Activated B cell treated with CpG ODN at 0.5 μM for 24 hours (primary cell): ENCODE measurements at regions of chr14 and their contacts with region 1.

Region 1: DNA sequence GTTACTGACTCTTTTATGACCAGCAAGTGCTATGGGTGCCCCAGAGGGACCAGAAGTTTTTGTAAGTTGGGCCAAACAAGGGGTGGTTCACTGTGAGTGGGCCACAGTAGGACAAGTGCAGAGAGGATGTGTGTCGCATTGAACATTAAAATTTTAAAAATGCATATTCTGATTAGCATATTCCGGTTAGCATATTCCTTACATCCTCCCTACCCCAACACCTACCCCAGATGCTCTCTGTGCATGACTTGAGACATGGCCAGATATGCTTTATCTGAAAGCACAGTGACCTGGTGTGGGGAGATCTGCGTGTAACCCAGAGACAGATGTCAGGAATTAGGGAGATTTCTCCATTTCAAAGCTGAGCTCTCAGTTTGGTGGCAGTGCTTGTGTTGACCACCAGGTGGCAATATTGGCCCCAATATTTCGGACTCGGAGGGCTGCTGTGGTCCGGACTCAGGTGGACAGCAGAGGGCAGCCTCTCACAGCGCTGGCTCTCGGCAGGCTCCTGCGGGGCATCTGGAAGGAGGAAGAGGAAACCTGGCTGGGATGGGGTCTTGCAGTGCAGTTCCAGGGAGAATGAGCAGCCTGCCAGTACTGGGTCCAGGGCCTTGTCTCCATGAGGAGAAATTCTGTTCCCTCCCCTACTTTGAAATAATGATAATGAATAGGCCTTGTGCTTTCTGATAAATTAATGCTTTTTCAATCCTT is 1.6 kb upstream of the CEBPE start:
- DNase-seq: peak; percentile 67
- ATAC-seq: peak; percentile 87
- H3K4me3 Mint-ChIP-seq: peak overlapping the region; percentile 67
- H3K27ac Mint-ChIP-seq: peak overlapping the region; percentile 89
- H3K4me1 Mint-ChIP-seq: peaks cover 36% of the 10 kb centered on the region
- H3K27me3 Mint-ChIP-seq: no peaks in the 10 kb centered on the region
- CTCF ChIP-seq: peak; percentile 84

Region 2: GRCh38 chr14:23076785-23077408 is 43.8 kb before region 1 on chr14:
- CTCF ChIA-PET with region 1: interaction called, 17 read pairs
- POLR2A ChIA-PET with region 1: no interaction called
- intact Hi-C with region 1: loop called (anchors 1 kb)
- DNase-seq: no peak
- ATAC-seq: peak; percentile 67
- H3K4me3 Mint-ChIP-seq: no peak overlapping the region
- H3K27ac Mint-ChIP-seq: no peak overlapping the region
- H3K4me1 Mint-ChIP-seq: peaks cover 7% of the 10 kb centered on the region
- H3K27me3 Mint-ChIP-seq: no peaks in the 10 kb centered on the region
- CTCF ChIP-seq: no peak

Region 3: GRCh38 chr14:23186913-23187654 is 66.4 kb after region 1 on chr14:
- CTCF ChIA-PET with region 1: interaction called, 162 read pairs
- POLR2A ChIA-PET with region 1: interaction called, 12 read pairs
- intact Hi-C with region 1: loop called (anchors 1 kb)
- DNase-seq: no peak
- ATAC-seq: peak; percentile 45
- H3K4me3 Mint-ChIP-seq: no peak overlapping the region
- H3K27ac Mint-ChIP-seq: no peak overlapping the region
- H3K4me1 Mint-ChIP-seq: no peaks in the 10 kb centered on the region
- H3K27me3 Mint-ChIP-seq: peaks cover 2% of the 10 kb centered on the region
- CTCF ChIP-seq: no peak

Region 4: GRCh38 chr14:23320774-23321571 is 200.3 kb after region 1 on chr14 and contains the start of gene PABPN1:
- CTCF ChIA-PET with region 1: interaction called, 30 read pairs
- POLR2A ChIA-PET with region 1: interaction called, 18 read pairs
- intact Hi-C with region 1: loop called (anchors 1 kb)
- DNase-seq: peak; percentile 89
- ATAC-seq: peak; percentile 87
- H3K4me3 Mint-ChIP-seq: peak within 1 kb of the TSS; percentile 90
- H3K27ac Mint-ChIP-seq: peak within 1 kb of the TSS; percentile 98
- H3K4me1 Mint-ChIP-seq: peaks cover 26% of the 10 kb centered on the region
- H3K27me3 Mint-ChIP-seq: no peaks in the 10 kb centered on the region
- CTCF ChIP-seq: no peak
- total RNA-seq, gene PABPN1: 259 and 264 TPM in 2 replicates

Region 5: DNA sequence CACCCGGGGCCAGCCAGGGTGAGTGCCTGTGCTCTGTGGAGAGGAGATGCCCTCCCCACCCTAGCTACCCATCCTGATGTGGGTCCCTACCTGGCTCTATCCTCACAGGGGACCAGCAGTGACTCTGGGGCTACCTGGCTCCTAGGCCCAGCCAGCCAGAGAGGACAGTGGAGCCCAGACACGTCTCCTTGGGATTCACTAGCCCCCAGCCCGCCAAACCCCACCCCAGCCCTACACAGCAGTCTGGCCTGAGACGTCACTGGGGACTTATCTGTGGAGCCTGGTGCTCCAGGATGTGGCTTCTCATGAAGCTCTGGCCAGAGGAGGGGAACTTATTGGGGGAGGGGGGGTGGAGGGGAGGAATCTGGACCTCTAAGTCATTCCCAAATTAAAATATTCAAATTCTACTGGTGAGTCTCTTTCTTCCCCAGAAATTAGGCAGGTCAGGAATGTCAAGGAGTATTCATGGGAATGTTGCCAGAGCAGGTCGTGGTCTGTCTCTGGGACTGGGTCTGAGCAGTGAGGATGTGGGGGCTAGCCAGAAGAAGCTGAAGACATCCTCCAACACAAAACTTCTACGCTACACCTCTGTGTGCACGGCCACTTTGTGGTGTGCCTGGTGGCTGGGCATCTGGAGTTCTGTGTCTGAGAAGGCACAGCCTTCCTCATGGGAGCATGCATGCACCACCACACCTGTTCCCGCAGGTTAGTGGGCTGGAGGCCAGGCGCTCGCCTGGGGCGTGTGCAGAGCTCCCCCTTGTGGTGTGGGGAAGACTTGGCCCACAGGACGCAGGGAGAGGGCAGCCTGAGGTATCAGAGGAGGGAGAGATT is 258.9 kb after region 1 on chr14:
- CTCF ChIA-PET with region 1: interaction called, 19 read pairs
- POLR2A ChIA-PET with region 1: interaction called, 3 read pairs
- intact Hi-C with region 1: loop called (anchors 1 kb)
- DNase-seq: peak; percentile 56
- ATAC-seq: peak; percentile 87
- H3K4me3 Mint-ChIP-seq: no peak overlapping the region
- H3K27ac Mint-ChIP-seq: no peak overlapping the region
- H3K4me1 Mint-ChIP-seq: no peaks in the 10 kb centered on the region
- H3K27me3 Mint-ChIP-seq: peaks cover 20% of the 10 kb centered on the region
- CTCF ChIP-seq: peak; percentile 81

Region 6: GRCh38 chr14:23555882-23556699 is 435.4 kb after region 1 on chr14 and contains the start of gene THTPA:
- CTCF ChIA-PET with region 1: interaction called, 3 read pairs
- POLR2A ChIA-PET with region 1: interaction called, 3 read pairs
- intact Hi-C with region 1: loop called (anchors 5 kb)
- DNase-seq: peak; percentile 88
- ATAC-seq: peak; percentile 79
- H3K4me3 Mint-ChIP-seq: peak within 1 kb of the TSS; percentile 94
- H3K27ac Mint-ChIP-seq: peak within 1 kb of the TSS; percentile 95
- H3K4me1 Mint-ChIP-seq: peaks cover 30% of the 10 kb centered on the region
- H3K27me3 Mint-ChIP-seq: no peaks in the 10 kb centered on the region
- CTCF ChIP-seq: no peak
- total RNA-seq, gene THTPA: 18.0 and 18.6 TPM in 2 replicates